ENCODE measurements at regions of chr21 and their contacts with region 1.

Region 1: DNA sequence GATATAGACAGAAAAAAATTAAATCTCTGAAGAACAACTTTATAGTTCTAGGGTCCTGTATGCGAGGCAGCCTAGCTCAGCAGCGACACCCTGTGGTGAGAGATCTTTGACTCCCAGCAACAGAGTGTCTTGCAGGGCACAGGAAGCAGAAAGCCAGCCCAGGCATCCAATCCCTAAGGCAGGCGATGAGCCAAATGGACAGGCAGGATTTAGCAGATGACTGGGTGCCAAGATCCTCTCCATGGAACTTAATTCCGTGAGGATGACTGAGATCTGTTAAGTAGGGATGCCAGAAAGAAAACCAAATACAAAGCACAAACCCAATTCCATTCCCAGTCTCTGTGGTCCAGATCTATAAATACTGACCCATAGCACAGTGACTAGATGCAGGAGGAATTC is 38.8 kb downstream of the HLCS start:
- DNase-seq: peak; percentile 87
- ATAC-seq: peak; percentile 80
- H3K4me3 Mint-ChIP-seq: no peak overlapping the region
- H3K27ac Mint-ChIP-seq: no peak overlapping the region
- H3K4me1 Mint-ChIP-seq: peaks cover 18% of the 10 kb centered on the region
- H3K27me3 Mint-ChIP-seq: no peaks in the 10 kb centered on the region
- CTCF ChIP-seq: peak; percentile 98

Region 2: DNA sequence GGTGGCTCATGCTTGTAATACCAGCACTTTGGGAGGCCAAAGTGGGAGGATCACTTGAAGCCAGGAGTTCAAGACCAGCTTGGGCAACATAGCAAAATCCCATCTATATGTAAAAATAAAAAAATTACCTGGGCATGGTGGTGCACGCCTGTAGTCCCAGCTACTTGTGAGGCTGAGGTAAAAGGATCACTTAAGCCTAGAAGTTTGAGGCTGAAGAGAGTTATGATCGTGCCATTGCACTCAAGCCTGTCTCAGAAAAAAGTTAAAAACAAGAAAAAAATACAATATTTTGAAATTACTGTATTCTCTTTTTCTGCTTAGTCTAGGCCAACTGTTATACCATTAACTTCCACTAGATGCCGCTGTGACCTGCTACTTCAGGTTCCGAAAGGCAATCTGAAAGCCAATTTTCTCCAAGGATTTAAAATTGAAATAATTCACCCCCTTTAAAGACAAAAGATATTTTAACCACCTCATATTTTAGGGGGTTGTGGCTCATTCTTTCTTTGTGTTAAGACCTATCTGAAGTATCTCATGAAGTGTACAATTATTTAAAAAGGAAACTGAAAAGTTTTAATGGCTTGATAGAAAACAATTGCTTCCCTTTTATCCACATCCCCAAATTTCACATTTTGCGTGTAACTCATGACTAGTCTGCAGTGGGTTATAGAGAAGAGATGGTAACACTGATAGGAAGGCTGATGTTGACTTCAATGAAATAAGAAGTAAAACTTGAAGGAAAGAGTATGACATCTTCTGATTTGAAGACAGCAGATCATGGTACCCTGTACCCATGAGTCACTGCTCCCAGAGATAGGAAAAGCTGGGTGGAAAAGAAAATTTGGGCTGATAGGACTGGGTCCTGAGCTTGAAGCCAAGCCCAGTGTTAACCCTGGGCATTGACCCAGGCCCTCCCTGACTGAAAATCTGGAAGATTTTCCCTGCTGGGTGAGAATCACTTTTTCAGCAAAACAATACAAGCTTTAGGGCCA is 423.4 kb before region 1 on chr21:
- CTCF ChIA-PET with region 1: interaction called, 19 read pairs
- POLR2A ChIA-PET with region 1: no interaction called
- intact Hi-C with region 1: loop called (anchors 5 kb)
- DNase-seq: peak; percentile 52
- ATAC-seq: no peak
- H3K4me3 Mint-ChIP-seq: no peak overlapping the region
- H3K27ac Mint-ChIP-seq: no peak overlapping the region
- H3K4me1 Mint-ChIP-seq: no peaks in the 10 kb centered on the region
- H3K27me3 Mint-ChIP-seq: no peaks in the 10 kb centered on the region
- CTCF ChIP-seq: peak; percentile 96

Region 3: DNA sequence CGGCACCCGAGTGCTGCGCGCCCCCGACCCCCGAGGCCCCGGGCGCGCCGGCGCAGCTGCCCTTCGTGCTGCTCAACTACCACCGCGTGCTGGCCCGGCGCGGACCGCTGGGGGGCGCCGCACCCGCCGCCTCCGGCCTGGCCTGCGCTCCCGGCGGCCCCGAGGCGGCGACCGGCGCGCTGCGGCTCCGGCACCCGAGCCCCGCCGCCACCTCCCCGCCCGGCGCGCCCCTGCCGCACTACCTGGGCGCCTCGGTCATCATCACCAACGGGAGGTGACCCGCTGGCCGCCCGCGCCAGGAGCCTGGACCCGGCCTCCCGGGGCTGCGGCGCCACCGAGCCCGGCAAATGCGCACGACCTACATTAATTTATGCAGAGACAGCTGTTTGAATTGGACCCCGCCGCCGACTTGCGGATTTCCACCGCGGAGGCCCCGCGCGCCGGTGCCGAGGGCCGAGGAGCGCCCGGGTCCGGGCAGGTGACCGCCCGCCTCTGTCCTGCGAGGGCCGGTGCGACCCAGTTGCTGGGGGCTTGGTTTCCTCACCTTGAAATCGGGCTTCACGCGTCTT is 179.8 kb before region 1 on chr21:
- CTCF ChIA-PET with region 1: interaction called, 3 read pairs
- POLR2A ChIA-PET with region 1: no interaction called
- intact Hi-C with region 1: loop called (anchors 5 kb)
- DNase-seq: peak; percentile 63
- ATAC-seq: peak; percentile 91
- H3K4me3 Mint-ChIP-seq: peak overlapping the region; percentile 37
- H3K27ac Mint-ChIP-seq: no peak overlapping the region
- H3K4me1 Mint-ChIP-seq: peaks cover 11% of the 10 kb centered on the region
- H3K27me3 Mint-ChIP-seq: peaks cover 38% of the 10 kb centered on the region
- CTCF ChIP-seq: no peak

Region 4: DNA sequence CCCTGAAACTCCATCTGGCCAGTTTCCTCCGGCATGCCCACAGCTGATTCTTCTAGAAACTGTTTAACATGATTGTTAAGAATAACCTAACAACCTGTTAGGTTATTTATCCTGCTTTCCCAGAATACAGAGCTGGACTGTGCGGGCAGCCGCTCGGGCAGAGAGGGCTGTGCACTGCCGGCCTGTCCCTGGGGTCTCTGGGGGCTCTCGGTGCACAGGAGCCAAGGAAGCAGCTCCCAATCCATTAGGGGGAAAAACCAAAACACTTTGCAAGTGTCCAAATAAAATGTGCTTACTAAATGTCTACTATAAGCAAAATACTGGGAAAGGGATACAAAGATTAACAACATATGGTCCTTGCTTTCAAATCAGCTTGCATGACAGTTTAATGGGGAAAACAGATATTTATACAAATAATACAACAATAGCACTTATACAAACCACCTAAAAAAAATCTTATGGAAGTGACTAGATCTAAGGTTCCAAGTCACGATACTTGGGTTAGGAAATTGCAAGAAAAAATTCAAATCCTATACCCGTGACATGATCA is 11.9 kb before region 1 on chr21:
- CTCF ChIA-PET with region 1: interaction called, 13 read pairs
- POLR2A ChIA-PET with region 1: no interaction called
- intact Hi-C with region 1: no loop called
- DNase-seq: no peak
- ATAC-seq: no peak
- H3K4me3 Mint-ChIP-seq: no peak overlapping the region
- H3K27ac Mint-ChIP-seq: no peak overlapping the region
- H3K4me1 Mint-ChIP-seq: peaks cover 7% of the 10 kb centered on the region
- H3K27me3 Mint-ChIP-seq: no peaks in the 10 kb centered on the region
- CTCF ChIP-seq: no peak

Region 5: DNA sequence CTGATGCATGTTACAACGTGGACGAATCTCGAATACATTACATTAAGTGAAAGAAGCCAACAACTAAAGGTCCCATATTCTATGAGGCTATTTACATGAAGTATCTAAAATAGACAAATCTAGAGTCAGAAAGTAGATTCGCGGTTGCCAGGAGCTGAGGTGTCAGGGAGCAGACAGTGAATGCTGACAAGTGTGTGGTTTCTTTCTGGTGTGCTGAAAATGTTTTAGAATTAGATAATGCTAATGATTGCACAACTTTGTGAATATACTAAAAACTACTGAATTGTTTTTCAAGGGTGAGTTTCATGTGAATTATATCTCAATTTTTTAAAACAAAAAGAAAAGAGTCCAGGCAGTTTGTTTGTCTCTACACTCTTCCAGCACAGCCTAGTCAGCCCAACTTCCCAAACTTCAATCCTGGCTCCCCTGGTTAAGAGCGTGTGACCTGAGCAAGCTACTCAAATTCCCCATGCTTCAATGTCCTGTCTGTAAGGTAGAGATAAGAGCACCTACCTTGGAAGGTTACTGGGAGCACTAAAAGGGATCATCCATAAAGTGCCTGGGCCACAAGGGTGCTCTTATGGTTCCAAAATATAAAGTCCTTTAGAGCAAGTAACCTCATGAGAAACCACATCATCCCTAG is 17.9 kb after region 1 on chr21:
- CTCF ChIA-PET with region 1: interaction called, 11 read pairs
- POLR2A ChIA-PET with region 1: no interaction called
- intact Hi-C with region 1: no loop called
- DNase-seq: no peak
- ATAC-seq: no peak
- H3K4me3 Mint-ChIP-seq: no peak overlapping the region
- H3K27ac Mint-ChIP-seq: no peak overlapping the region
- H3K4me1 Mint-ChIP-seq: no peaks in the 10 kb centered on the region
- H3K27me3 Mint-ChIP-seq: no peaks in the 10 kb centered on the region
- CTCF ChIP-seq: no peak